ENCODE measurements at regions of chr3 and their contacts with region 1.

Region 1: GRCh38 chr3:135965506-135966270 is at the start of gene PPP2R3A:
- DNase-seq: peak; percentile 69
- ATAC-seq: peak; percentile 80
- H3K4me3 ChIP-seq: peak within 1 kb of the TSS; percentile 82
- H3K27ac ChIP-seq: peak within 1 kb of the TSS; percentile 50
- H3K4me1 ChIP-seq: peaks cover 36% of the 10 kb centered on the region
- H3K27me3 ChIP-seq: no peaks in the 10 kb centered on the region
- CTCF ChIP-seq: no peak
- total RNA-seq, gene PPP2R3A: 9.4 and 12.3 TPM in 2 replicates

Region 2: DNA sequence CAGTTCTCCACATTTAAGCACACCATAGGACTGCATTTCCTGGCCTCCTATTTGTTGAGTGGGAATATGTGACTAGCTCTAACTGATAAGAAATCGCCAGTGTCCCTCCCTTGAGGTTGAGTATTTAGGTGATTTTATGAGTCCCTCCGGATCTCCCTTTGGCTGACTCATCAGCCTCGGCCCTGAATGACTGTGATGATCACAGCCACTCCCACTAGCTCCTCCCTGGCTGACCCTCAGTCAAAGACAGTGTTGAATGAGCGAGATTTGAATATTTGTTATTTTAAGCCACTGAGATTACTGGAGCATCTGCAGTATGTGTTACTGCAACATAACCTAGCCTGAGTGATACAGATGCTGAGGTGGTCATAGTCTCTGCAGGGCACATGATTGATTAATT is 655.4 kb before region 1 on chr3:
- CTCF ChIA-PET with region 1: no interaction called
- POLR2A ChIA-PET with region 1: no interaction called
- intact Hi-C with region 1: no loop called
- DNase-seq: peak; percentile 73
- ATAC-seq: no peak
- H3K4me3 ChIP-seq: no peak overlapping the region
- H3K27ac ChIP-seq: peak overlapping the region; percentile 70
- H3K4me1 ChIP-seq: peaks cover 22% of the 10 kb centered on the region
- H3K27me3 ChIP-seq: no peaks in the 10 kb centered on the region
- CTCF ChIP-seq: no peak

Region 3: DNA sequence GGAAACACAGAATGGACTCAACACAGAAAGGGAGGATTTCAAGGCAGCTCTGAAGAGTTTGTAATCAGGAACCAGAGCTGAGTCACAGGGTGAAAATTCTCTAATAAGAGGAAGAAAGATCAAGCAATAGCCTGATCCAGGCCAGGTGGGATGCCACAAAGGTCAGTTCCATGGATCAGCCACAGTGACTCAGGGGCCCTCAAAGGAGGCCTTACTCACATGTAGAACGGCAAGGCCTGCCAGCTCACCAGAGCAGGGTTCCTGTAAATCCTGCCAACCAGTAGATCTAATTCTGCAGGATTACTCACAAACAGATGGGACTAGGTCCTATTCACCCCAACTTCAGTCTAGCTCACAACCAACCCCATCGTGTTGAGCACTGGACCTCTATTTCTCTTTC is 78.5 kb before region 1 on chr3:
- CTCF ChIA-PET with region 1: no interaction called
- POLR2A ChIA-PET with region 1: no interaction called
- intact Hi-C with region 1: no loop called
- DNase-seq: peak; percentile 67
- ATAC-seq: no peak
- H3K4me3 ChIP-seq: no peak overlapping the region
- H3K27ac ChIP-seq: no peak overlapping the region
- H3K4me1 ChIP-seq: peaks cover 19% of the 10 kb centered on the region
- H3K27me3 ChIP-seq: no peaks in the 10 kb centered on the region
- CTCF ChIP-seq: no peak

Region 4: DNA sequence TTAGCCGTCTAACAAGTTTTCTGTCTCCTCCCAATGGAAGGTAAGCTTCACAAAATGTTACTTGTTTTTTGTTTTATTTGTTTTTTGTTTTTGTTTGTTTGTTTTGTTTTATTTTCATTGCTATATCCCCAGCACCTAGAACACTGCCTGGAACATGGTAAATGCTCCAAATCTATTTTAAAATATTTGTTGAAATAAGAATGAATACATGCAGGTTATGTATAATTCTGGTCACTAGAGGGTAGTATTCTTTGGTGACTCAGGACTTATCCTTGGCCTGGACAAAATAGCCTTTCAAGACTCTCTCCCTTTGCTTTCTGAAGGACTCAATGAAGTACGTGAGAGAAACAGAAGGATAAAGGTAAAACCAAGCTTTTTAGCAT is 47.1 kb before region 1 on chr3:
- CTCF ChIA-PET with region 1: interaction called, 4 read pairs
- POLR2A ChIA-PET with region 1: no interaction called
- intact Hi-C with region 1: loop called (anchors 5 kb)
- DNase-seq: peak; percentile 52
- ATAC-seq: peak; percentile 71
- H3K4me3 ChIP-seq: no peak overlapping the region
- H3K27ac ChIP-seq: no peak overlapping the region
- H3K4me1 ChIP-seq: no peaks in the 10 kb centered on the region; the same call in 1 of the 2 replicates
- H3K27me3 ChIP-seq: no peaks in the 10 kb centered on the region
- CTCF ChIP-seq: peak; percentile 67

Region 5: GRCh38 chr3:135929670-135930069 is 36.0 kb before region 1 on chr3:
- CTCF ChIA-PET with region 1: no interaction called
- POLR2A ChIA-PET with region 1: no interaction called
- intact Hi-C with region 1: loop called (anchors 5 kb)
- DNase-seq: peak; percentile 53
- ATAC-seq: peak; percentile 20; the same call in 1 of the 2 replicates
- H3K4me3 ChIP-seq: no peak overlapping the region
- H3K27ac ChIP-seq: no peak overlapping the region
- H3K4me1 ChIP-seq: peaks cover 16% of the 10 kb centered on the region
- H3K27me3 ChIP-seq: no peaks in the 10 kb centered on the region
- CTCF ChIP-seq: no peak